Left ventricle myocardium superior (tissue), 1 donor: ENCODE measurements at regions of chr2 and their contacts with region 1.

Region 1: GRCh38 chr2:196987649-196988364 is 61.3 kb upstream of the PGAP1 start:
- DNase-seq: no peak
- ATAC-seq: peak; percentile 96

Region 2: GRCh38 chr2:196926562-196927375 is 61.0 kb before region 1 on chr2 and contains the start of gene PGAP1:
- intact Hi-C with region 1: loop called (anchors 10 kb)
- DNase-seq: peak; percentile 95
- ATAC-seq: peak; percentile 99
- total RNA-seq, gene PGAP1: 6.5 TPM

Region 3: GRCh38 chr2:197168705-197169104 is 180.9 kb after region 1 on chr2:
- intact Hi-C with region 1: no loop called
- DNase-seq: peak; percentile 53
- ATAC-seq: peak; percentile 67

Region 4: GRCh38 chr2:197184959-197185586 is 197.3 kb after region 1 on chr2:
- intact Hi-C with region 1: loop called (anchors 10 kb)
- DNase-seq: peak; percentile 91
- ATAC-seq: peak; percentile 98